ENCODE measurements at regions of chr14 and their contacts with region 1.

Region 1: GRCh38 chr14:106286697-106287290 is 760.4 kb downstream of the TMEM121 start:
- DNase-seq: peak in 6 of 14 experiments; percentile 7 to 58 (median 33)
- ATAC-seq: no peak
- H3K4me3 ChIP-seq: no peak overlapping the region
- H3K4me3 Mint-ChIP-seq: no peak overlapping the region
- H3K27ac ChIP-seq: no peak overlapping the region
- H3K27ac Mint-ChIP-seq: no peak overlapping the region
- H3K4me1 ChIP-seq: no peaks in the 10 kb centered on the region
- H3K4me1 Mint-ChIP-seq: no peaks in the 10 kb centered on the region
- H3K27me3 ChIP-seq: peaks cover 4 to 7% of the 10 kb centered on the region in 2 experiments
- H3K27me3 Mint-ChIP-seq: peaks cover 21% of the 10 kb centered on the region
- CTCF ChIP-seq: peak; percentile 56

Region 2: DNA sequence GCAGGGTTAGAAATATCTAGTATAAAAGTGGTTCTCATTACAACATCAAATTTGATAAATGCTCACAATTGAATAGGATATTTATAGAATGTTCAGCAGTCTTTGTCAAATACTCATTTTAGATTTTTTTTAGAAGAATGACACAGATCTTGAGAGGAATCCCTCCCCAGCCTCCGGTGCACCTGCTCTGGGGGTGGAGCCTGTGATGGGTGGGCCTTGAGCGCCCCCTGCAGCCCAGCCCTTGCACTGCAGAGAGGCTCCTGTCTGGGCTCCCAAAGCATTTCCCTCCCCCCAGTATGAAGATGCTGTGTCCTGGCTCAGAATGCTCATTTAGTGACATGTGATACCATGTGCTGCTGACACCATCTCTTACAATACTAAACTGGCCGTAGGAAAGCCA is 31.9 kb after region 1 on chr14:
- CTCF ChIA-PET with region 1: no interaction called
- POLR2A ChIA-PET with region 1: no interaction called
- intact Hi-C with region 1: no loop called
- DNase-seq: peak; percentile 26 to 74 (median 52)
- ATAC-seq: peak; percentile 90
- H3K4me3 ChIP-seq: no peak overlapping the region
- H3K4me3 Mint-ChIP-seq: no peak overlapping the region
- H3K27ac ChIP-seq: no peak overlapping the region
- H3K27ac Mint-ChIP-seq: no peak overlapping the region
- H3K4me1 ChIP-seq: no peaks in the 10 kb centered on the region
- H3K4me1 Mint-ChIP-seq: no peaks in the 10 kb centered on the region
- H3K27me3 ChIP-seq: no peaks in the 10 kb centered on the region
- H3K27me3 Mint-ChIP-seq: peaks cover 11% of the 10 kb centered on the region
- CTCF ChIP-seq: peak; percentile 78

Region 3: DNA sequence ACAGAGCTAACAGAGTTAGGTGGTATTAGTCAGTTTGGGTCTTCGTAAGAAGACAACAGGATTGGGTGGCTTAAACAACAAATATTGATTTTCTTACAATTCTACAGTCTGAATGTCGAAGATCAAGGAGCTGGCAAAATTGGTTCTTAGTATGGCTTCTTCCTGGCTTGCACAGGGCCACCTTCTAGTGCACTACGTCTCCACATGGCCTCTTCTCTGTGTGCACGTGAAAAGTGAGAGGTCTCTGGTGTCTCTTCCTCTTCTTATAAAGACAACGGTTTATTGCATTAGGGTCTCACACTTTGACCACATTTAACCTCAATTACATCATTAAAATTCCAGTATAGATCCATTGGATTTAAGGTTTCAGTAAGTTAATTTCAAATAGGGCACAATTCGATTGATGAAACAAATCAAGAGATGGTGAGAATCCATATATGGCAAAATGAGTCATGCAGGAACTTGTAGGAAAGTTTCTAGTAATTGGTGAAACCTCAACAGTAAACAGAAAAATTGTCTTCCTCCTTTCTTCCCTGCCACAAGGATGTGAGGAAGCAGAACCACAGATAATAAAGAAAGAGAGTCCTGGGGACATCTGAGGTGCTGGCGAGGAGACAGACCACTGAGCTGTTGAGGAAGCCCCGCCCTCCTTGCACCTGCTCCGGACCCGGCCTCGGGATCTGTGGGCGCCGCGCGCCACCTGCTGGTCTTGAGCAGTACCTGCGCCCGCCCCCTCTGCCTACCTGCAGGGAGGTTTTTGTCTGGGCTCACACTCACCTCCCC is 86.3 kb after region 1 on chr14:
- CTCF ChIA-PET with region 1: no interaction called
- POLR2A ChIA-PET with region 1: no interaction called
- intact Hi-C with region 1: loop called in 1 of 2 experiments (anchors 5 kb)
- DNase-seq: peak; percentile 62 to 88 (median 72)
- ATAC-seq: peak; percentile 94
- H3K4me3 ChIP-seq: no peak overlapping the region
- H3K4me3 Mint-ChIP-seq: peak overlapping the region; percentile 35
- H3K27ac ChIP-seq: no peak overlapping the region
- H3K27ac Mint-ChIP-seq: peak overlapping the region; percentile 1
- H3K4me1 ChIP-seq: peaks cover 12% of the 10 kb centered on the region
- H3K4me1 Mint-ChIP-seq: peaks cover 24% of the 10 kb centered on the region
- H3K27me3 ChIP-seq: no peaks in the 10 kb centered on the region
- H3K27me3 Mint-ChIP-seq: no peaks in the 10 kb centered on the region
- CTCF ChIP-seq: peak; percentile 96

Measured in CD4-positive, alpha-beta T cell (primary cell).